ENCODE measurements at regions of chr10 and their contacts with region 1.

Region 1: GRCh38 chr10:67779465-67780203 is 58.4 kb downstream of the DNAJC12 start:
- DNase-seq: peak in 38 of 42 donors; percentile 26 to 94 (median 78)

Region 2: GRCh38 chr10:67666416-67667034 is 113.1 kb before region 1 on chr10:
- intact Hi-C with region 1: loop called (anchors 2 kb)
- DNase-seq: no peak

Region 3: DNA sequence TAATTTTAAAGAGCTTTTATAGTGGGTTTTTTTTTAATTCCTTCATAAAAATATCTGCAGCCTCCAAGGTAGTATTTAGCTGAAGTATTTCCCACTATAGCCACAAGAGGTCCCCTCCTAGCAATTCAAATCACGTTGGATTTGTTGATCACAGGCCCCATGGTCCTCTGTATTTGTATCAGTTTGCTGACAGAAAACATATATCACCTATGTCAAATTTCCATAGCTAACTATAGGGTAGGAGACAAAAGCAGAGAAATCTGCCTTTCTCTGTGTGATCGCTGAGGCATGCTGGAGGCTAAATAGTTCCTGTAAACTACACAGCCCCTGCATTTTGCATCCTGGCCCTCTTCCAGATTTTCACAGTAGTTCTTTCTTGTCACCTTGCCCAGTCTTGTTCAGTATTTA is 81.9 kb before region 1 on chr10:
- intact Hi-C with region 1: loop called (anchors 10 kb)
- DNase-seq: peak in 24 of 42 donors; percentile 9 to 69 (median 22)

Measured in head of caudate nucleus (tissue), 42 donors.